ENCODE measurements at regions of chr2 and their contacts with region 1.

Region 1: DNA sequence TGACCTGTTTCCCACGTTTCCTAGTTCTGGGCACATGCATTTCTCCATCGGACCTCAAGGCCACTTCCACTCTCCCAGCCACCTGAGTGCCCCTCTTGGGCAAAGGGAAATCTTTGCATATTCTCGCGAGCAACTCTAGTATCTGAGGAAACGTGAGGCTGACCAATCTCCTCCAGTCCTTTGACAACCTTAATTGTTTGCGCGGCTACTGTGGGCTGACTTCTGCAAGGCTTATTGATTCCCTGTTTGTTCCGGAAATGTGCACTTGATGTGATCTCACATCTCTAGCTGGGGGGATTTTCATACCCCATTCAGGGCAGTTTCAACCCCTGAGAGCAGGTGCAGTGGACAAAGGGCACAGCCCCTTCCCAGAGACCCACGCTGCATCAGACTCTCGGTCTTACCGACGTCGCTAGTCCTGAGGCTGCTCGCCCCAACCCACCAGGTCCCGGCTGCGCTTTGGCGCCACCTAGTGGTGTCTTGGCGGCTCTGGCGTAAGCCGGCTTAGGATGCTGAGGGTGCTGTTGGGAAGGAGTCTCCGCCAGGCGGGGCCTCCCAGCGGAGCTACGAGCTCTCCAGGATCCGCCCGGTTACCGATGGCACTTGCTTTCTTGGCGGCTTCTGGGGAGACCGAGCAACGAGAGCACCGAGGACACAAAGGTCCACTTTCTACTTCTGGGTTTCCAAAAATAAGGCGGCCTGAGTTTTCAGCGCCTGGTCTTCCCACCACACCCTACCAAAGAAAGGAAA is 24.8 kb upstream of the SPR start:
- DNase-seq: peak; percentile 88 to 90 (median 89)
- ATAC-seq: peak; percentile 99
- H3K4me3 ChIP-seq: peak overlapping the region in 1 of 3 donors; percentile 15
- H3K27ac ChIP-seq: no peak overlapping the region
- H3K4me1 ChIP-seq: peaks cover 0 to 5% (median 0%) of the 10 kb centered on the region in 4 donors
- H3K27me3 ChIP-seq: no peaks in the 10 kb centered on the region
- CTCF ChIP-seq: peak; percentile 88 to 100 (median 100)
- POLR2A ChIP-seq: no peak

Region 2: GRCh38 chr2:72770879-72771461 is 91.4 kb before region 1 on chr2:
- intact Hi-C with region 1: loop called (anchors 5 kb)
- DNase-seq: peak in 1 of 3 donors; percentile 65
- ATAC-seq: peak; percentile 80 to 94 (median 88)
- H3K4me3 ChIP-seq: no peak overlapping the region
- H3K27ac ChIP-seq: no peak overlapping the region
- H3K4me1 ChIP-seq: no peaks in the 10 kb centered on the region
- H3K27me3 ChIP-seq: no peaks in the 10 kb centered on the region
- CTCF ChIP-seq: peak; percentile 83 to 92 (median 84)
- POLR2A ChIP-seq: no peak

Measured in right lobe of liver (tissue), 6 donors.